CD4-positive, alpha-beta T cell (primary cell): ENCODE measurements at regions of chr1 and their contacts with region 1.

Region 1: DNA sequence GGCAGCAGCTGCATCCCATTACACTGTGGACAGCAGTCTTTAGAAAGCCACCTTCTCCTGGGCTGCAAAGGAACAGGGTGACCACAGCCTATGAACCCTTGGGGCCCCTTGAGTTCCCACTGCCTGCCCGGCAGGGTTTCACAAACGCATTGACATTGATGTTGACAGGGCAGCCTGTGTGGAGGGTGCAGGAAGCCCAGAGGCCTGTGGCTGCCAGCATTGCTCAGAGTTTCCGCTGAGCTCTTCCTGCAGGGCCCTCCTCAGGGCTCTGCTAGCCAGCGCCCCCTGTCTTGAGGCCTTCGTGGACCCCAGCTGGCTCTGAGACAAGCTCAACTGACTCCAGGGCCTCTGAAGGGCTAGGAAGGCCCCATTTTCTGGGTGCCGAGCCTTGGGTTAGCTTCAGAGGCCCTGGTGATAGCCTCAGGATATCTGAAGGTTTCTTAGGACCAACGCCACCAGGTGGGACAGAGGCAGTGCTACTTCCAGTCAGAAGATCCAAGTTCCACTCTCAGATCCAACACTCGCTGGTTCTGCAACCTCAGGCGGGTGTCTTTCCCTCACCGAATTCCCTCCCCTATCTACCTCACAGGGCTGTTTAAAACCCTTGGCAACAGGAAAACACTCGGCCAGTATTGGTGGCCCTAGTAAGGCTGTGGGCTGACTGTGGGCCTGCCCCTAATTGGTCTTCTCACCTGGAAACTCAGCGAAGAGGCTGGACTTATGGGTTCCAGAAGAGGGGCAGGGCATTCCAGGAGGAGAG is 27.2 kb upstream of the EPS8L3 start:
- DNase-seq: peak; percentile 51 to 90 (median 70)
- ATAC-seq: peak; percentile 95
- H3K4me3 ChIP-seq: no peak overlapping the region
- H3K4me3 Mint-ChIP-seq: peak overlapping the region; percentile 48
- H3K27ac ChIP-seq: peak overlapping the region; percentile 32 to 69
- H3K27ac Mint-ChIP-seq: peak overlapping the region; percentile 66
- H3K4me1 ChIP-seq: peaks cover 81% of the 10 kb centered on the region
- H3K4me1 Mint-ChIP-seq: peaks cover 60% of the 10 kb centered on the region
- H3K27me3 ChIP-seq: no peaks in the 10 kb centered on the region
- H3K27me3 Mint-ChIP-seq: no peaks in the 10 kb centered on the region
- CTCF ChIP-seq: peak; percentile 76

Region 2: DNA sequence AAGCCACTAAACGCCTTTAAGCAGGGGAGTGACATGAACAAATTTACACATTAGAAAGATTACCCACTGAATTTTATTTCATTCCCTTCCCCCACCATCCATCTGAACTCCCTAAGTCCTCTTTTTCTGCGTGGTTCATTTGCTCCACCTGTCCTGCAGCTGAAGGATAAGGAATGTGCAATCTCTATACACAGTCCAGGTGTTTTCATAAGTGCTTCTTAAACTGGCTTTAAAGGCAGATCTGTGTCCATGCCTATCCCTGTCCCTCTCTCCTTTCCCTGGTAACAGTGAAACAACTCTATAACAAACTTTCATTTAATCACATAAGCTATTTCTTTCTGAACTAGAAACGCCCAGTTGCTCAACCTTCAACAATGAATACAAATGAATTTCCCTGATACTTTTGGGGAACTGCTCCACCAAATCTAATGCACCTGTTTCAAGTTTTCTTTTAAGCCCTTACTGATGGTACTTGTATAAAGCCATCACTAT is 58.5 kb before region 1 on chr1:
- CTCF ChIA-PET with region 1: no interaction called
- POLR2A ChIA-PET with region 1: no interaction called
- intact Hi-C with region 1: no loop called
- DNase-seq: no peak
- ATAC-seq: no peak
- H3K4me3 ChIP-seq: no peak overlapping the region
- H3K4me3 Mint-ChIP-seq: no peak overlapping the region
- H3K27ac ChIP-seq: no peak overlapping the region
- H3K27ac Mint-ChIP-seq: no peak overlapping the region
- H3K4me1 ChIP-seq: no peaks in the 10 kb centered on the region
- H3K4me1 Mint-ChIP-seq: no peaks in the 10 kb centered on the region
- H3K27me3 ChIP-seq: no peaks in the 10 kb centered on the region
- H3K27me3 Mint-ChIP-seq: no peaks in the 10 kb centered on the region
- CTCF ChIP-seq: no peak

Region 3: DNA sequence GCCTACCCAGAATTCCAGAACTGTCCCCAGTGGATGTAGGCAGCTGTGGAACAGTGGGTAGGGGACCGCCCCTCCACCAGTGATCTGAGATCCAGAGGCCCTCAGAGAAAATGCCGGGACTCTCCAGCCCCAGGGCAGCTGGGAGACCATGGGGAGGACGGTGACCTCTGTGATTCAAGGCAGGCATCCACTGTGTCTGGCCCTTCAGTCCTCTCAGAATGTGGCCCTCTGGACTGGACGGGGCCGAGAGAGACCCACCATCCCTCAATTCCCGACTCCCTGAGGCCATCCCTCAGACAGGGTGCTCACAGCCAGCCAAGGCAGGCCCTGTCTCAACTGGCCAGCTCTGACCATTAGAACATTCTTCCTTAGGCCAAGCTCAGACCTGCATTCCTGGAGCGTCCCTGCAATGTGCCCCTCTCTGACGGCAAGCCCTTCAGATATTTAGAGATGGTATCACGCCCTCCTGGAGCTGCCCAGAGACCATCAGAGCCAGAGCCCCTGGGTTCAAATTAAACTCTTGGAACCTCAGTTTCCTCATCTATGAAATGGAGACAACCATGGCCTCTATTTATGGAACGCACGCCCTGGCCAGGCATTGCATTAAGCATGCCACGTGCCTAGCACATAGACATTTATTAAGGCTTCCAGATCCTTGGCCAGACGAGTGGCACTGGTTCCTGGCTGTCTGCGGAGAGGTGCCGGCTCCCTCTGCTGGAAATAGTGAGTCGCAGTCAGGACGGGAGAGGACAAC is 17.6 kb before region 1 on chr1:
- CTCF ChIA-PET with region 1: interaction called, 17 read pairs
- POLR2A ChIA-PET with region 1: interaction called, 11 read pairs
- intact Hi-C with region 1: no loop called
- DNase-seq: peak; percentile 50 to 87 (median 62)
- ATAC-seq: peak; percentile 88
- H3K4me3 ChIP-seq: no peak overlapping the region
- H3K4me3 Mint-ChIP-seq: no peak overlapping the region
- H3K27ac ChIP-seq: no peak overlapping the region
- H3K27ac Mint-ChIP-seq: no peak overlapping the region
- H3K4me1 ChIP-seq: peaks cover 21% of the 10 kb centered on the region
- H3K4me1 Mint-ChIP-seq: peaks cover 12% of the 10 kb centered on the region
- H3K27me3 ChIP-seq: no peaks in the 10 kb centered on the region
- H3K27me3 Mint-ChIP-seq: no peaks in the 10 kb centered on the region
- CTCF ChIP-seq: peak; percentile 66

Region 4: DNA sequence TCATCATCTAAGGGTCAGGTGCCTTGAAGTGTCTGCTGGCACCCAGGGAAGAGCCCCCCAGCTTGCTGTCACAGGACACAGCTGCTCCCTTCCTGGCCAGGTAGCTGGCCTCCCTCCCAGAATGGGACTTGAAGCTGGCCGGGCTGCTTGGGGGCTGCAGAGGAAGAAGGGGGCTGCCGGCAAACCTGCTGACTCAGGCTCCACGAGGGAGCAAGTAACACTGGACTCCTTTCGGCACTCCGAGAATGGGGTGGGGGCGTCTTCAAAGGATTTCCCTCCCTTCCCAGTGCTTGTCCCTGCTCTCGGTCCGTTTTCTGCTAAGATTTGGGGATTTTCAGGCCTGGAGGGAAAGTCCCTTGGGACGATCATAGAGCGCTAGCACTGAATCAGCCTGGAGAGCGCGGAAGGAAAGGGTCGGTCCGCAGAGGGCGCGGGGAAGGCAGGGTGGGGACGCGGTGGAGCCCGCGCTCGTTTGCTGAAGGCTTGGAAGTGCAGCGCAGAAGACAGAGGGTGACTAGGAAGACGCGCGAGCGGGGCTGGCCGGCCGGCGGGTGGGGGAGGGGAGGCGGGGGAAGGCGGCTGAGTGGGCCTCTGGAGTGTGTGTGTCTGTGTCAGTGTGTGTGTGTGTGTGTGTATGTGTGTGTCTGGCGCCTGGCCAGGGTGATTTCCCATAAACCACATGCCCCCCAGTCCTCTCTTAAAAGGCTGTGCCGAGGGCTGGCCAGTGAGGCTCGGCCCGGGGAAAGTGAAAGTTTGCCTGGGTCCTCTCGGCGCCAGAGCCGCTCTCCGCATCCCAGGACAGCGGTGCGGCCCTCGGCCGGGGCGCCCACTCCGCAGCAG is 119.4 kb after region 1 on chr1 and contains the start of gene CSF1:
- CTCF ChIA-PET with region 1: interaction called, 4 read pairs
- POLR2A ChIA-PET with region 1: interaction called, 8 read pairs
- intact Hi-C with region 1: loop called in 1 of 2 experiments (anchors 5 kb)
- DNase-seq: peak; percentile 20 to 84 (median 42)
- ATAC-seq: peak; percentile 43
- H3K4me3 ChIP-seq: peak within 1 kb of the TSS; percentile 79
- H3K4me3 Mint-ChIP-seq: peak within 1 kb of the TSS; percentile 91
- H3K27ac ChIP-seq: peak within 1 kb of the TSS in 1 of 2 donors; percentile 35
- H3K27ac Mint-ChIP-seq: peak within 1 kb of the TSS; percentile 77
- H3K4me1 ChIP-seq: peaks cover 81% of the 10 kb centered on the region
- H3K4me1 Mint-ChIP-seq: peaks cover 68% of the 10 kb centered on the region
- H3K27me3 ChIP-seq: no peaks in the 10 kb centered on the region
- H3K27me3 Mint-ChIP-seq: peaks cover 10% of the 10 kb centered on the region
- CTCF ChIP-seq: no peak
- total RNA-seq, gene CSF1: 6.5 to 6.7 TPM